ENCODE measurements at regions of chr6 and their contacts with region 1.

Region 1: GRCh38 chr6:110415086-110415916 is at the start of gene DDO:
- DNase-seq: peak; percentile 93
- total RNA-seq, gene DDO: 16.2 TPM

Region 2: DNA sequence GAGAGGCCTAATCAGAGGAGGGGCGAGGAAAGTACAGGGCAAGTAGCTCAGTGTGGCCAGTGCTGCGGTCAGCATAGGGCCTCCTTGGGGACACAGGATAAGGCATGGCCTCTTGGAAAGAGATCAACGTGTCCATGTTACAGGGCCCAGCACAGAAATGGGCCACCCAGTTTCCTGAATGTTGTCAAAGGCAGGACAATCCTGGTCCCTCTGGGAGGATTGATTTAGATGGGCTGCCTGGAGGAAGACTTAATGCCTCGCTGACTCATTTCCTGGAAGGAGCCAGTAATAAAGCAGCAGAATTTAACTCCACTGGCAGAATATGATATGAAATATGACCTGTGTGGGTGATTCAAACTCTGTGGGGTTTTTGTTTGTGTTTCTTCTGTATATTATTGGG is 16.5 kb before region 1 on chr6:
- intact Hi-C with region 1: loop called (anchors 2 kb)
- DNase-seq: no peak

Region 3: GRCh38 chr6:110720066-110720465 is 304.8 kb after region 1 on chr6:
- intact Hi-C with region 1: no loop called
- DNase-seq: no peak

Measured in cardiac septum (tissue), 1 donor.